Naive thymus-derived CD8-positive, alpha-beta T cell (primary cell): ENCODE measurements at regions of chr12 and their contacts with region 1.

Region 1: GRCh38 chr12:98490501-98491453 is 24.6 kb upstream of the TMPO start:
- DNase-seq: peak; percentile 69 to 92 (median 81)
- ATAC-seq: peak; percentile 84 to 93
- H3K4me3 Mint-ChIP-seq: peak overlapping the region; percentile 22 to 71 (median 49)
- H3K27ac Mint-ChIP-seq: peak overlapping the region; percentile 55 to 97 (median 94)
- H3K4me1 Mint-ChIP-seq: peaks cover 0 to 8% (median 5%) of the 10 kb centered on the region in 4 donors
- H3K27me3 Mint-ChIP-seq: no peaks in the 10 kb centered on the region

Region 2: DNA sequence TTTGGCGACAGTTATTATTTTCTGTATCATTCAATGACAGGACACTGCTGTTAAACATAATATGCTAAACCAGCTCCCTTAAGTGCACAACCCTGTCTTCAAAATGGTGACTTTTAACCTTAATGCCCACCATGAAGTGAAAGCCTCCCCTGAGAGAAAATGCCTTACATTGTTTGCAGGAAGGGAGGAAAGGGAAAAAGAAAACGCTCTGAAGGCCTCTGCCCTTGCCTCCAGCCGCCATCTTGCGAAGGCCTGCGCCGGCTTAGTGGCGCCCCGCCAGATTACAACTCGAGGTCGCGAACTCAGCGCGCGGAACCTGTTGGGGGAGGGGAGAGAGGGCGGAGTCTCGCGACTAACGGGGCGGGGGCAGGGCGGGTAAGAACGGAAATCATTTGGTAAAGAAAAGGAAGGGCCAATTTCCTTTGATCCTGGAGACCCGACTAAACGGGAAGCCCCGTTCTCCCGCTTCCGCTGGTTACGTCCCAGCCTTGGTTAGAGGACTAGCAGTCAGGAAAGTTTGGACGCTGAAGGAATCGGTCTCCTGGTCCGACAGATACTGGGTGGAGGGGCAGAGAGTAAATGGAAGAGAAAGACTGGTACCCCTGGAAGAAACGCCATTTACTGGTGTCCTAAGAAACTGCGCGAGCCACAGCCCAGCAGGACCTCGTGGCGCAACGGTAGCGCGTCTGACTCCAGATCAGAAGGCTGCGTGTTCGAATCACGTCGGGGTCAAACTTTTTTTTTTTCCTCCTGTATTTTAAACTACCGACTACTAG is 13.0 kb after region 1 on chr12:
- POLR2A ChIA-PET with region 1: interaction called, 12 read pairs
- DNase-seq: peak; percentile 87 to 99 (median 93)
- ATAC-seq: peak; percentile 82 to 84
- H3K4me3 Mint-ChIP-seq: peak overlapping the region; percentile 84 to 99 (median 97)
- H3K27ac Mint-ChIP-seq: peak overlapping the region; percentile 96 to 100 (median 98)
- H3K4me1 Mint-ChIP-seq: peaks cover 15 to 28% (median 20%) of the 10 kb centered on the region in 4 donors
- H3K27me3 Mint-ChIP-seq: peaks cover 0 to 9% (median 0%) of the 10 kb centered on the region in 5 donors

Region 3: GRCh38 chr12:98544751-98545150 is 54.0 kb after region 1 on chr12:
- POLR2A ChIA-PET with region 1: no interaction called
- DNase-seq: no peak
- ATAC-seq: no peak
- H3K4me3 Mint-ChIP-seq: no peak overlapping the region
- H3K27ac Mint-ChIP-seq: no peak overlapping the region
- H3K4me1 Mint-ChIP-seq: peaks cover 0 to 10% (median 2%) of the 10 kb centered on the region in 4 donors
- H3K27me3 Mint-ChIP-seq: no peaks in the 10 kb centered on the region